CD4-positive, alpha-beta memory T cell (primary cell): ENCODE measurements at regions of chr17 and their contacts with region 1.

Region 1: DNA sequence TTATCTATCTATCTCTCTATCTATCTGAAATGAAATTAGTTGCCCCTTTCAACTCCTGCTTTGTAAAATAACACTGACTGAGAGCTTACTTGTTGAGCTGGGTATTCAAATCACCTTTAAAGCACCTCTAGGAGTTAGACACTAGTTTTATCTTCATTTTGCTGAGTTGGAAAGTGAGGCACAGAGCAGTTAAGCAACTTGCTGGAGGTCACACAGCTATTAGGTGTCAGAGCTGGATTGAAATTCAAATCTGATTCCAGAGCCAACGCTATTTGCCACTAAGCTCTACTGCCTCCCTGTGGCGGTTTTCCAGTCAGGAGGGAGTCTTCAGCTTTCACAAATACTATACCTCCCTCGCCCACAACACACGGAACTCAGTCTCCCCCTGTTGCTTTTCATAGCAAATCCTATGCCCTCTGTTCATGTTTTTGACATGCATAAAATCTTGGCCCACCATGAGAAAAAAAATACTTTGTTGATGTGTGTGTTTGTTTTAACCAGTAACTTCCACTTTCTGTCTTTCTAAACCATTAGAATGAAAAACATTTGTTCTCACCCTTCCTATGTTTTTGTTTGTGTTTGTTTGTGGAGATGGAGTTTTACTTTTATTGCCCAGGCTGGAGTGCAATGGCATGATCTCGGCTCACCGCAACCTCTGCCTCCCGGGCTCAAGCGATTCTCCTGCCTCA is 74.8 kb upstream of the SMURF2 start:
- DNase-seq: peak; percentile 35 to 49 (median 45)
- H3K4me3 ChIP-seq: no peak overlapping the region
- H3K4me3 Mint-ChIP-seq: no peak overlapping the region
- H3K27ac ChIP-seq: no peak overlapping the region
- H3K27ac Mint-ChIP-seq: peak overlapping the region in 1 of 7 donors; percentile 10
- H3K4me1 ChIP-seq: no peaks in the 10 kb centered on the region
- H3K4me1 Mint-ChIP-seq: peaks cover 6 to 12% (median 8%) of the 10 kb centered on the region in 4 donors
- H3K27me3 ChIP-seq: no peaks in the 10 kb centered on the region
- H3K27me3 Mint-ChIP-seq: no peaks in the 10 kb centered on the region

Region 2: GRCh38 chr17:64599187-64599676 is 137.7 kb before region 1 on chr17:
- CTCF ChIA-PET with region 1: interaction called, 10 read pairs
- POLR2A ChIA-PET with region 1: no interaction called
- intact Hi-C with region 1: loop called (anchors 5 kb)
- DNase-seq: peak; percentile 40 to 77 (median 51)
- H3K4me3 ChIP-seq: no peak overlapping the region
- H3K4me3 Mint-ChIP-seq: peak overlapping the region; percentile 43 to 86 (median 76)
- H3K27ac ChIP-seq: peak overlapping the region; percentile 28
- H3K27ac Mint-ChIP-seq: peak overlapping the region; percentile 58 to 93 (median 87)
- H3K4me1 ChIP-seq: peaks cover 22% of the 10 kb centered on the region
- H3K4me1 Mint-ChIP-seq: peaks cover 18 to 39% (median 33%) of the 10 kb centered on the region in 4 donors
- H3K27me3 ChIP-seq: no peaks in the 10 kb centered on the region
- H3K27me3 Mint-ChIP-seq: no peaks in the 10 kb centered on the region

Region 3: GRCh38 chr17:64653325-64653984 is 83.5 kb before region 1 on chr17:
- CTCF ChIA-PET with region 1: interaction called, 10 read pairs
- POLR2A ChIA-PET with region 1: no interaction called
- intact Hi-C with region 1: no loop called
- DNase-seq: no peak
- H3K4me3 ChIP-seq: no peak overlapping the region
- H3K4me3 Mint-ChIP-seq: peak overlapping the region in 1 of 8 donors; percentile 25
- H3K27ac ChIP-seq: no peak overlapping the region
- H3K27ac Mint-ChIP-seq: no peak overlapping the region
- H3K4me1 ChIP-seq: peaks cover 31% of the 10 kb centered on the region
- H3K4me1 Mint-ChIP-seq: peaks cover 25 to 56% (median 38%) of the 10 kb centered on the region in 4 donors
- H3K27me3 ChIP-seq: no peaks in the 10 kb centered on the region
- H3K27me3 Mint-ChIP-seq: no peaks in the 10 kb centered on the region

Region 4: DNA sequence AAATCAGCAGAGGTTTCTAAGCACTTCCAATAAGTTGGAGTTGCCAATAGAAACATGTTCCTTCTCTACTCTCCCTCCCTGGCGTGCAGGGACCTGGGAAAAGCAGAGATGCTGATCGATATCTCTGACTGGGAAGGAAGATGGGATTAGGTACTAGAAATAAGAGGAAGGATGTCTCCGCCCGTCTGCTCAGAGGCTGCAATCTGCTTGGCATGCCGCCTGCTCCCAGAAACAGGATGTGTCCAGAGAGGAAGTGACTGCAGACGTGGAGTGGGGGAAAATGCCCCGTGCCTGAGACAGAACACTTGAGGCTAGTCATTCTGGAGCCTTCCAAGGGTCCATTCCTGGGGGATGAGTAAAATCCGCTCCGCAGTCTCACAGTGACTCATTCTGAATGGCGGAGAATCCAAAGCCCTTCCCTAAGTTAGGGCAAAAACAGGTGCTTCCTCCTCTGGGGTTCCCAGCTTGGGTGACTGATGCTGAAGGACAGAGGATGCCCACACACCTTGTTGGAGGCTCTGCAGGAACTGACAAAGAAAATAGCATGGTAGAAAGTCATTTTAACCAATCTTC is 29.8 kb before region 1 on chr17:
- CTCF ChIA-PET with region 1: interaction called, 14 read pairs
- POLR2A ChIA-PET with region 1: interaction called, 3 read pairs
- intact Hi-C with region 1: no loop called
- DNase-seq: no peak
- H3K4me3 ChIP-seq: no peak overlapping the region
- H3K4me3 Mint-ChIP-seq: peak overlapping the region in 3 of 8 donors; percentile 22 to 43 (median 27)
- H3K27ac ChIP-seq: no peak overlapping the region
- H3K27ac Mint-ChIP-seq: peak overlapping the region in 3 of 7 donors; percentile 2 to 64 (median 12)
- H3K4me1 ChIP-seq: peaks cover 51% of the 10 kb centered on the region
- H3K4me1 Mint-ChIP-seq: peaks cover 40 to 54% (median 45%) of the 10 kb centered on the region in 4 donors
- H3K27me3 ChIP-seq: no peaks in the 10 kb centered on the region
- H3K27me3 Mint-ChIP-seq: no peaks in the 10 kb centered on the region

Region 5: GRCh38 chr17:64765191-64765958 is 28.4 kb after region 1 on chr17:
- CTCF ChIA-PET with region 1: no interaction called
- POLR2A ChIA-PET with region 1: no interaction called
- intact Hi-C with region 1: no loop called
- DNase-seq: no peak
- H3K4me3 ChIP-seq: no peak overlapping the region
- H3K4me3 Mint-ChIP-seq: no peak overlapping the region
- H3K27ac ChIP-seq: no peak overlapping the region
- H3K27ac Mint-ChIP-seq: peak overlapping the region in 3 of 7 donors; percentile 6 to 53 (median 9)
- H3K4me1 ChIP-seq: no peaks in the 10 kb centered on the region
- H3K4me1 Mint-ChIP-seq: peaks cover 0 to 13% (median 2%) of the 10 kb centered on the region in 4 donors
- H3K27me3 ChIP-seq: no peaks in the 10 kb centered on the region
- H3K27me3 Mint-ChIP-seq: no peaks in the 10 kb centered on the region

Region 6: DNA sequence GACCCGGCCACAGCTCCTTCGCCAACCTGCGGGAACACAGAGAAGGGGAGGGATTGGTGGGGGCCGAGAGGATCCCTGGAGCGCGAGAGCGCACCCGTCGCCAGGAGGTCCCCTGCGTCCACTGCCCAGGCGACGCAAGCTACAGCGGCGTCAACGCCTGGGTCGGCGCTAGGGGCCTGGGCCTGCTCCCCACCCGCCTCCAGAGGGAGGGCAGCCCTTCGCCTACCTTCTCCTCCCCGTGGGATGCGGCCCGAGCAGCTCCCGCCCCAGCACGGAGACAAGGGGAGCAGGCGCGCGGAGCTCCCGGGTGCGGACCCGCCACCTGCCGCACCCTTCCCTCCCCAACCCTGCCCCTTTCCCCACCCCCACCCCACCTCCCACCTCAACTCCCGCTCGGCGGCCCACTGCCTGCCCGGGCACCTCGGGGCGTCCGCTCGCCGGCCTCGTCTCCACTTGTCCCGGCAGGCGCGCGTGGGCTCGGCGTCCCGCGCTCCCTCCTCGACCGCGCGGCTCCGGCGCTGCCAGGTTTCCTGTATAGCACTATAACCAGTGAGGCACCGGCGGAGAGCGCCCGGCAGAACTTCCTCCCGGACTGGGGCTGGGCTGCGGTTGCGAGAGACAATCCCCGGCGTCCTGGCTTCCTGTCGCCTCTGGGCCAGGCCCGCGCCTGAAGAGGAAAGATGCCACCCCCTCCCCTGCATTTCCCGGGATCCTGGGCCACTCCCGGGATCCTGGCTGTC is 44.2 kb after region 1 on chr17:
- CTCF ChIA-PET with region 1: no interaction called
- POLR2A ChIA-PET with region 1: no interaction called
- intact Hi-C with region 1: no loop called
- DNase-seq: peak; percentile 41 to 66 (median 50)
- H3K4me3 ChIP-seq: peak overlapping the region in 1 of 2 donors; percentile 67
- H3K4me3 Mint-ChIP-seq: peak overlapping the region; percentile 81 to 88 (median 84)
- H3K27ac ChIP-seq: peak overlapping the region; percentile 55
- H3K27ac Mint-ChIP-seq: peak overlapping the region; percentile 57 to 85 (median 66)
- H3K4me1 ChIP-seq: peaks cover 23% of the 10 kb centered on the region
- H3K4me1 Mint-ChIP-seq: peaks cover 10 to 33% (median 18%) of the 10 kb centered on the region in 4 donors
- H3K27me3 ChIP-seq: no peaks in the 10 kb centered on the region
- H3K27me3 Mint-ChIP-seq: no peaks in the 10 kb centered on the region